ENCODE measurements at regions of chr1 and their contacts with region 1.

Region 1: DNA sequence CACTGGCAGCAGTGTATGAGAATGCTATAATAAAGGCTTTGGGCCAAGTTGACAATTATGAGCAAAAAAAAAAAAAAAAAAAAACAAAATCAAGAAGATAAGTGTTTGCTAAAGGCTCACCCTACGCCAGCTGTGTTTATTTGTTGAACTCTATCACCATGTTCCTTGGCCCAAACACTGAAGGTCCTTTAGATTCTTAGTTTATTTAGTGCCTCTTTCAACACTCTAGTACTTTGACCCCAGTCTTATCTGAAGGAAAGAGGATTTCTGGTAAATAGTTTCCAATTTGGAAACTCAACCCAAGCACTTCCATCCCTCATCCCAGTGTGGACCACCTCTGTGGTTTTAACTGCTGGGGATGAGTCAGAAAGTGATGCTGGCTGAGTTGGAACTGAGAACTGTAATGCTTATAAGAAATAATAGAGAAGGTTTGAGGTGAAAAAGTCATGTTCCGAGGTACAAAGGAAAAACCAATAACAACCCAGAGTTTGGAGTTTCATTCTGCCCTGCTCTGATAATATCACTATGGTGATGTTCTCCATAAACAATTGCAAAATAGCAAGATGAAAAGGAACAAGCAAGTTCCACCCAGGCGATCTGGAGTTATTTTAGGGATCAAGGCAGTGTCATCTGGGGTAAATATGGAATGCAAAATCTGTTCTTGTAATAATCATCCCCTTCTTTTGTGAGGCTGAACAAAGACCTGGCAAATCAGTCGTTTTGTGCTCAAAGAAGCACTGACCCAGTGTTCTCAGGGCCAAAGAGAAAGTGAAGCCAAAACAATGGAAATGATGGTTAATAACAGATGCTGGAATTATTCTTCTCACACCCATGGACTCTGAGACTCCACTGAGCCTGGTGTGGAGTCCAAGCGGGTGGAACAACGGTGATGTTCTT is 19.7 kb upstream of the CAPZB start:
- DNase-seq: peak; percentile 38
- ATAC-seq: peak; percentile 77 to 81

Region 2: DNA sequence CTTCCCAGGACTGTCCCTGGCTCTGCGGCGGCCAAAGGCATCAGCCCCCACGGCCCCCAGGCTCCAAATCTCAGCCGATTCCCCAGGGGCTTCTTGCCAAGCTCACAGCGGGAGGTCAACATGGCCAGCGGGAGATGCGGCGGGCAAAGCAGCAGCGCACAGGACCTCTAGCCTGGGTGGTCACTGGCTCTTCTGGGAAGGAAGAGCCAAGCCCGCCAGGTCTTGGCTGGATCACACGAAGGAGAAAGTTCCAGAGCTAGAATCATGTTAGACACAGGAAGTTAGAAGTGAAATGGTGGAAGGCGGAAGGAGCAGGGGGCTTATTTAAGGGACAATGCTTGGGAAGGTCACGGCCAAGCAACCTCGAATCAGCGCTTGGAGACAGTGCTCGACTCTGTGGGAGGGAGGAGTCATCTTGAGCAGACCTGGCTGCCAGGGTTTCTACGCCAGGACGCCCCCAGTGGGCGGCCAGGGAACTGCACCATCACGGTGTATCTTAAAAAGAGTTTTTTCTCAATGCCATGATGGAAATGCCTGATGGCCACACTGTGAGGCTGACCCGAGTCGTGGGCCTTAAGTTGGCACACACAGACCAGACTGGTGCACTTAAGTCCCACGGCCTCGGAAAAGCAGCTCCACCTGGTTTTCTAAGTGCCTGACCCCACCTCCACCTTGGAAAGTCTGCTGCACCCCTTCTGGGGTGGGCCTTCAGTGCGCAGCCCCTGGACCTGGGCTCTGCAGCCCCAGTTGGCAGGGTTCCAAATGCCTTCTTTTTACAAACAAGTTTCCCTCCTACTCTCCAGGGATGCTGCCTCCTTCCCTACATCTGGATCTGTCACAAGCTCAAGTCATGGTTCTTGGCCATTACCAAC is 163.6 kb before region 1 on chr1:
- intact Hi-C with region 1: no loop called
- DNase-seq: peak; percentile 74
- ATAC-seq: peak; percentile 42 to 64

Region 3: GRCh38 chr1:19485362-19486187 is 19.5 kb before region 1 on chr1 and contains the start of gene CAPZB:
- intact Hi-C with region 1: no loop called
- DNase-seq: peak; percentile 97
- ATAC-seq: peak; percentile 92 to 94
- total RNA-seq, gene CAPZB: 227 to 254 TPM

Region 4: GRCh38 chr1:19563324-19564097 is 58.5 kb after region 1 on chr1:
- intact Hi-C with region 1: loop called in 1 of 2 experiments (anchors 5 kb)
- DNase-seq: peak; percentile 70
- ATAC-seq: peak; percentile 92 to 94

Region 5: GRCh38 chr1:19616489-19616888 is 111.4 kb after region 1 on chr1:
- intact Hi-C with region 1: no loop called
- DNase-seq: no peak
- ATAC-seq: no peak

Measured in left cardiac atrium (tissue), 4 donors.